ENCODE measurements at regions of chr7 and their contacts with region 1.

Region 1: DNA sequence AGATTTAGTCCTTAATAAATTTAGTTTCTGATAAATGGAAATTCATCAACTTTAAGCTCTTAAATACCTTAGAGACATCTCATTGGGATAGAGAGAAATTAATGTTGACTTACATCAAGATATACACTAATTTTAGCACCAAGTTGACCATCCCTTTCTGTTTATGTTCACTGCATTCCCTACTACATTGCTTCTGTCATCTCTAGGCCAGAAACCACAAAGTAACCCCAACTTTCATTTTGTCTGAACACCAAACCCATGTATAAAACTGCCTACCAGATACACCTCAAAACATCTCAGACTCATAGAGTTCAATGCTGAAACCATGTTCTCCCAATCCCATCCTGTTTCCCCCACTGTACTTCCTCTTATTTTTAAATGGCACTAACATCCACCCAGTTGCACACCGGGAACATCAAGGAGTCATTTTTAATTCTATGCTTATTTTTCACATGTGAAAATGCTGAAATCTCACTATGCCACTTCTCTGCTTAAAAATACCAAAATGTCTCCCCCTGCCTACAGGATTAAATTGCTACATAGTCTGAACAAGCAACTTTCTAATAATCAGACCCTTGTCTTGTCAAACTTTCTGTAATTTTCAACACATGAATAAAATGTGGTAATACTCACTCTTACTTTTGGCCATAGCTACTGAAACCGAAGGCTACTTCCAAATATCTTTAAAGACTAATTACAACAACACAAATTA is 201.6 kb downstream of the SEMA3D start:
- DNase-seq: no peak
- H3K4me3 ChIP-seq: no peak overlapping the region
- CTCF ChIP-seq: no peak

Region 2: DNA sequence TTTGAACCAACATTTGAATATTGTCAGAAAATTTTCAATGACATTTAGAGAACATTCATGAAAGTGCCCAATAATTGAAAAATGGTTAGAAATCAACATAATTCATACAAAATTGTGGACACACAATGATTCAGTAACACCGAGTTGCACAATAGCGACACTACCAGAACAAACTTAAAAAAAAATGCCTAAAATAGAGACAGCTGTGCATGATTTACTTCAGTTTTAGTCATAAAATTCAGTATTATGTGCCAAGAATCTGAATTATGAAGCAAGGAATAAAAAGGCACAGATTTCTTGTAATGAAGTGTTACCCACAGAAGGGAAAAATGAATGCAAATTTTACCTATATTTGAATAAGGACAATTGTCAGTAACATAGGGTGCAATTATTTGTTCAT is 194.3 kb before region 1 on chr7:
- CTCF ChIA-PET with region 1: no interaction called
- POLR2A ChIA-PET with region 1: no interaction called
- DNase-seq: peak; percentile 16
- H3K4me3 ChIP-seq: no peak overlapping the region
- CTCF ChIP-seq: no peak

Region 3: DNA sequence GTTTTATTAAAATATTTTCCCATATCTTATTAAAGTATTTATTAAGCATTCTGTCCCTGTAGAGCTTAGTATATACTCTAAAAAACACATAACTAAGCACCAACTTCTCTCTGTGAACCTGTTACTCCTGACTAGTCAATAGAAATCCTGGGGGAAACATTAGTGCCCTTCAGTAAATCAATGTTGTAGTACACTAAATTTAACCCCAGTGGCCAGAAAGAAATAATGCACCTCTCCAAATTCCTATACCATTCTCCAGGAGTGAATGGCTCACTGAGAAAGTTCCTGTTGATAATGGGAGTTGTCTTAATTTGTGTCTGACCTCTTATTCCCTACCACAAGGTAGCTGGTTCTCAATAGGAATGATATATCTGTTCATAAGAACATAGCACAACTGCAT is 13.4 kb after region 1 on chr7:
- CTCF ChIA-PET with region 1: interaction called, 12 read pairs
- POLR2A ChIA-PET with region 1: no interaction called
- DNase-seq: no peak
- H3K4me3 ChIP-seq: no peak overlapping the region
- CTCF ChIP-seq: no peak

Region 4: GRCh38 chr7:85054306-85054705 is 69.1 kb after region 1 on chr7:
- CTCF ChIA-PET with region 1: no interaction called
- POLR2A ChIA-PET with region 1: no interaction called
- DNase-seq: no peak
- H3K4me3 ChIP-seq: no peak overlapping the region
- CTCF ChIP-seq: no peak

Measured in AG04449 (cell line).